ENCODE measurements at regions of chr10 and their contacts with region 1.

Region 1: DNA sequence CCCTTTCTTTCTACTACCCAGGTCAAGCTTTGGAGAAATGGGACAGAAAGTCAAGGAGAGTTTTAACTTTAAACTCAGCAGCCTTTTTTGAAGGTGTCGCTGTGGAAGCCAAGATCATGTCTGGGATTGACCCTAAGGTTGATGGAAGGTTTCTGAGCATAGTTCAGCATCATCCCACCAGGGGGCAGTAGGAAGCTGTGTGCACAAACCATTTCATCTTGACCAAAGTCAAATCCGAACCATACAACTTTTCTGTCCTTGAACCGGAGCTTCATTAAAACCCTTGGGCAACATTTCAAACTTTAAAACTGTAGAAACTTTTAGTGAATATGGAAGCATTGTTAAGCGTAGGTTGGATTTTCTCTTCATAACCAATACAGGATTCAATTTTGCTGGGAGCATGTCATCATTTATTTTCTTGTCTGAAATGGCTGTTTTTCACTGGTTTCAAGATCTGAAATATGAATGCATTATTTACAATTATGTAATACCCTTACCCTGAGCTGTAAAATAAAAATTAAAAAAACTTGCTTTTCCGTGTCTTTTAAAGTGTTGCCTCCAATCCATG is 214.4 kb upstream of the KIAA1217 start:
- DNase-seq: peak; percentile 58
- ATAC-seq: peak; percentile 73 to 81

Region 2: GRCh38 chr10:24201503-24202180 is 207.1 kb after region 1 on chr10:
- intact Hi-C with region 1: loop called (anchors 1 to 5 kb)
- DNase-seq: no peak
- ATAC-seq: no peak

Region 3: GRCh38 chr10:24360282-24361127 is 365.9 kb after region 1 on chr10:
- intact Hi-C with region 1: loop called (anchors 5 to 10 kb)
- DNase-seq: peak; percentile 80
- ATAC-seq: peak; percentile 82 to 85

Region 4: GRCh38 chr10:24503461-24504320 is 509.1 kb after region 1 on chr10:
- intact Hi-C with region 1: loop called in 1 of 2 experiments (anchors 5 kb)
- DNase-seq: no peak
- ATAC-seq: peak in 1 of 2 donors; percentile 39

Region 5: DNA sequence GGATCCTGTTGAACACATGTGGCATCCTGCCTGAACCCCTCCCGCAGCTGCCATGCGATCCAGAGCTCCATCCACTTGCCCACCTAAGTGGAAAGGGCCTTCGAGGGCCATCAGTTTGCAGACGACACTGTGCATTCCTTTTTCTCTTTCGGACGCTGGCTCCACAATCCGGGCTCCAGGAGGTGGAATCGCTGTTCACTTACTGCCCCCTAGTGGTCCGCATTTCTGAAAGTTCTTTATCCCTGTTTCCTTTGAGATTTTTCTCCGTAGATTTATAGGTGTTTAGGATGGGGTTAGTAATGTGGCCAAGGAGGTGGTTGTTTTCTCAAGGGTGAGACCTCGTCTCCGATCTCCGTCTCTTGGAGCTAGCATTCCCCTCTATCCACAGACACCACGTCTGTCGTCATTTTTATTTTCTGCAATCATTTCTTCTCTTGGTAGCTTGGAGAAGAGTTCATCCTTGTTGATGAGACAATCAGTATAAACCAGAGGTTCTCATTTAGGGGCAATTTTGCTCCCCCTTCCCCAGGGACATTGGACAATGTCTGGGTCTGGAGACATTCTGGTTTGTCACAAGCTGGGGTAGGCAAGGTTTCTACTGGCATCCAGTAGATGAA is 524.5 kb after region 1 on chr10:
- intact Hi-C with region 1: loop called in 1 of 2 experiments (anchors 5 kb)
- DNase-seq: peak; percentile 69
- ATAC-seq: peak; percentile 71 to 73